HEK293T (cell line): ENCODE measurements at regions of chr2 and their contacts with region 1.

Region 1: GRCh38 chr2:237411683-237412423 is 2.1 kb downstream of the COL6A3 start:
- DNase-seq: no peak

Region 2: DNA sequence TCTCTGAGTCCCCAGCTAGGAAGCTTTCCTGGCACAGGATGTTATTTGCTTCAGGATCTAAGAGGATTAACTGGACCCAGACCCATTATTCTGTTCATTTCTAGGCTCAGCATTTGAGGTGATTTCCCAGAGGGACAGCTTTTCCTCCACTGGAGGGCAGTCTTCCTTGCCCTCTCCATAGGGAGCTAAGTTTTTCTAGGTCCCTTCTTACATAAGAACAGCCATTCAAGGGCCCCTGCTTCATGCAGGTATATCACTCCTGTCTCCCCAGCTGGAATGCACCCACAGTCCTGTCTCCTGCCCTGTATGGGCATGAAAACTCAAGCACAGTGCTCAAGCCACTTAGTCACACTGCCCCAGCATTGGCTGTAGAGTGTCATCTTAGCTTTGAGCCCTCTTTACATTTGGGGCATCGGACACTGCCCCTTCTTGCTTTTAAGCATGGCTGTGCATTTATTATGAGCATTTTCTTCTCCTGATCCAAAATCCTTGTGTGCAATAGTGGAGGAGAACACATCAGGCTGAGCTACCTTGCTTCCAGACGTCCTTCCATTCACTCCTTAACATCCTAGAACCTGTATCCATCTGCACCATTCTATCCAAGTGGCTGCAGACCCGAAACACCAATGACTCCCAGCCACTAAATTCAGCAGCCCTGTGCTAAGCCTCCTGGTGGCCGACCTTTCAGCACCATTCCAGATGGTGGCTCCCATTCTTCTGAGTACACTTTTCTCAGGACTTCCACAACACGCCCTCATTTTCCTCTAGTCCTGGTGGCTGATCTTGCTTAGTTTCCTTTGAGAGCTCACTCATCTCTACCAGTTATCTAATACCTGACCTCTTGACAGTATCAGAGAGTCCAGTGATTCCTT is 246.2 kb before region 1 on chr2:
- CTCF ChIA-PET with region 1: interaction called, 13 read pairs
- POLR2A ChIA-PET with region 1: no interaction called
- DNase-seq: peak; percentile 17

Region 3: DNA sequence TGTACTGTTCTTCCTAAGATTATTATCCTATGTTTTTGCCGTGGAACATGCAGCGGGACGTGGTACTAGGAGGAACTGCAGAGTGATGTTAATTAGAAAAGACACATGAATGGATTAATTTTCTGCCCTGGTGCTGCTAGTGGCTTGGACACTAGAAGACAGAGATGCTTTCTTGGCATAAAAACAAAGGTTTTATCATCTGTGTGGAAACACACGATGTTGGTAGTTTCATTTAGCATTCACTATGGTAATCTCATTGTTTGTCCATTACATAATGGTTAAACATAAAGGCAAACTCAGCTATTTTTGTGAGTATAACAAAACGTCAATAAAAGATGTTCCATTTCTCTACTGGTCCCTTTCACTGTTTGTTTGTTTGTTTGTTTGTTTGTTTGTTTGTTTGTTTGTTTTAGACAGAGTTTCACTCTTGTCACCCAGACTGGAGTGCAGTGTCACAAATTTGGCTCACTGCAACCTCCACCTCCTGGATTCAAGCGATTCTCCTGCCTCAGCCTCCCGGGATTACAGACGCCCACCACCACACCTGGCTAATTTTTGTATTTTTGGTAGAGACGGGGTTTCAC is 20.6 kb before region 1 on chr2:
- CTCF ChIA-PET with region 1: no interaction called
- POLR2A ChIA-PET with region 1: no interaction called
- DNase-seq: no peak

Region 4: GRCh38 chr2:237639836-237640220 is 228.0 kb after region 1 on chr2:
- CTCF ChIA-PET with region 1: no interaction called
- POLR2A ChIA-PET with region 1: no interaction called
- DNase-seq: no peak